Caco-2 (cell line): ENCODE measurements at regions of chr4 and their contacts with region 1.

Region 1: DNA sequence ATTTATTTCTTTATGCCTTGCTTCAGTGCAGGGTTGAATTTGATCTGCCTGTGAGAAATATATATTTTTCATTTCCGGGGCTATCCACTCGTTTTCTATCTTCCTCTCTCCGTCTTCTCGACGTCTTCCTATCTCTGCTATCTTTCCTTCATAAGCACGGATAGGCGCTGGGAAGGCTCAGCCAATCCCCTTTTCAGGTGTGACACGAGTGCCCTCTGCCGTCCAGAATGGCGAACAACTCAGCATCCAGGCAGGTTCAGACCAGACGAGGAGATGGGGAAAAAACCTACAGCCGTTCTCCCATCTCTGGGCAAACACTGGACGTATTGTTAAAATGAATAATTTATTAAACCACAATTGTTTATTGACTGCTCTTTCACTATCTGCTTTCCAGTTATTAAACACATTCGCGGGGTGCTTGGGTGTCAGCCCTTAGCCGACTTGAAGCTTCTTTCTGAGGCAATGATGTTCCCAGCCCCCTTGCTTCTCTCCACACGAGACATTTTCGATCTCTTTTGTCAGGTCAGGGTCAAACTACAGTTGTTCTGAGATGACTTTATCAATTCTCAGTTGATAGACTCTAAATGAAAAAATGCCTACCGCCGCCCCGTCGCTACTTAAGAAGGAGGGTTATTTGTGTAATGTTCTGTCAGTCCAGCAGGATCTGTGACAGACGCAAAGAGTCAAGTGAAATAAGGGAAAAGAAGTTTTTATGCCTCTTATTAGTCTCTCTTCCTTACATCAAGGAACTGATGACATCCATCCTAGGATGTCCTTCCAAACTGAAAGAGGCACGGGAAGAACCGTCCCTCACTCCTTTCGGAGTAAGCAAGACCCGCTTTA is 96.3 kb upstream of the NOCT start:
- DNase-seq: peak; percentile 72 to 78
- H3K4me3 ChIP-seq: no peak overlapping the region
- H3K4me3 Mint-ChIP-seq: peak overlapping the region; percentile 42
- H3K27ac Mint-ChIP-seq: no peak overlapping the region
- H3K4me1 ChIP-seq: no peaks in the 10 kb centered on the region
- H3K4me1 Mint-ChIP-seq: peaks cover 10% of the 10 kb centered on the region
- H3K27me3 ChIP-seq: no peaks in the 10 kb centered on the region
- H3K27me3 Mint-ChIP-seq: no peaks in the 10 kb centered on the region
- CTCF ChIP-seq: peak; percentile 65 to 77

Region 2: GRCh38 chr4:138199568-138200235 is 719.6 kb before region 1 on chr4:
- CTCF ChIA-PET with region 1: no interaction called
- POLR2A ChIA-PET with region 1: no interaction called
- intact Hi-C with region 1: loop called (anchors 10 kb)
- DNase-seq: peak; percentile 77 to 83
- H3K4me3 ChIP-seq: no peak overlapping the region
- H3K4me3 Mint-ChIP-seq: peak overlapping the region; percentile 56
- H3K27ac Mint-ChIP-seq: peak overlapping the region; percentile 79
- H3K4me1 ChIP-seq: peaks cover 27% of the 10 kb centered on the region
- H3K4me1 Mint-ChIP-seq: peaks cover 33% of the 10 kb centered on the region
- H3K27me3 ChIP-seq: no peaks in the 10 kb centered on the region
- H3K27me3 Mint-ChIP-seq: no peaks in the 10 kb centered on the region
- CTCF ChIP-seq: no peak

Region 3: GRCh38 chr4:138485498-138485897 is 433.8 kb before region 1 on chr4:
- CTCF ChIA-PET with region 1: no interaction called
- POLR2A ChIA-PET with region 1: no interaction called
- intact Hi-C with region 1: no loop called
- DNase-seq: peak in 1 of 2 experiments; percentile 1
- H3K4me3 ChIP-seq: no peak overlapping the region
- H3K4me3 Mint-ChIP-seq: no peak overlapping the region
- H3K27ac Mint-ChIP-seq: no peak overlapping the region
- H3K4me1 ChIP-seq: no peaks in the 10 kb centered on the region
- H3K4me1 Mint-ChIP-seq: no peaks in the 10 kb centered on the region
- H3K27me3 ChIP-seq: no peaks in the 10 kb centered on the region
- H3K27me3 Mint-ChIP-seq: no peaks in the 10 kb centered on the region
- CTCF ChIP-seq: no peak

Region 4: GRCh38 chr4:138576684-138577083 is 342.6 kb before region 1 on chr4:
- CTCF ChIA-PET with region 1: no interaction called
- POLR2A ChIA-PET with region 1: no interaction called
- intact Hi-C with region 1: loop called (anchors 1 kb)
- DNase-seq: peak in 1 of 2 experiments; percentile 33
- H3K4me3 ChIP-seq: no peak overlapping the region
- H3K4me3 Mint-ChIP-seq: no peak overlapping the region
- H3K27ac Mint-ChIP-seq: no peak overlapping the region
- H3K4me1 ChIP-seq: no peaks in the 10 kb centered on the region
- H3K4me1 Mint-ChIP-seq: no peaks in the 10 kb centered on the region
- H3K27me3 ChIP-seq: no peaks in the 10 kb centered on the region
- H3K27me3 Mint-ChIP-seq: no peaks in the 10 kb centered on the region
- CTCF ChIP-seq: peak; percentile 47 to 63

Region 5: GRCh38 chr4:138835832-138836533 is 83.3 kb before region 1 on chr4:
- CTCF ChIA-PET with region 1: no interaction called
- POLR2A ChIA-PET with region 1: no interaction called
- intact Hi-C with region 1: loop called (anchors 2 kb)
- DNase-seq: peak; percentile 59
- H3K4me3 ChIP-seq: no peak overlapping the region
- H3K4me3 Mint-ChIP-seq: no peak overlapping the region
- H3K27ac Mint-ChIP-seq: peak overlapping the region; percentile 33
- H3K4me1 ChIP-seq: peaks cover 9% of the 10 kb centered on the region
- H3K4me1 Mint-ChIP-seq: peaks cover 7% of the 10 kb centered on the region
- H3K27me3 ChIP-seq: no peaks in the 10 kb centered on the region
- H3K27me3 Mint-ChIP-seq: no peaks in the 10 kb centered on the region
- CTCF ChIP-seq: no peak

Region 6: GRCh38 chr4:138897811-138898226 is 21.5 kb before region 1 on chr4:
- CTCF ChIA-PET with region 1: no interaction called
- POLR2A ChIA-PET with region 1: no interaction called
- intact Hi-C with region 1: loop called (anchors 2 kb)
- DNase-seq: peak; percentile 55 to 61
- H3K4me3 ChIP-seq: no peak overlapping the region
- H3K4me3 Mint-ChIP-seq: peak overlapping the region; percentile 50
- H3K27ac Mint-ChIP-seq: peak overlapping the region; percentile 71
- H3K4me1 ChIP-seq: peaks cover 41% of the 10 kb centered on the region
- H3K4me1 Mint-ChIP-seq: peaks cover 28% of the 10 kb centered on the region
- H3K27me3 ChIP-seq: no peaks in the 10 kb centered on the region
- H3K27me3 Mint-ChIP-seq: no peaks in the 10 kb centered on the region
- CTCF ChIP-seq: no peak